ENCODE measurements at regions of chr10 and their contacts with region 1.

Region 1: GRCh38 chr10:104337974-104338735 is at the start of gene ITPRIP:
- DNase-seq: peak; percentile 54 to 87 (median 66)
- ATAC-seq: peak; percentile 71
- H3K4me3 ChIP-seq: peak within 1 kb of the TSS; percentile 92
- H3K4me3 Mint-ChIP-seq: peak within 1 kb of the TSS; percentile 96
- H3K27ac ChIP-seq: peak within 1 kb of the TSS; percentile 89 to 92
- H3K27ac Mint-ChIP-seq: peak within 1 kb of the TSS; percentile 88
- H3K4me1 ChIP-seq: peaks cover 51% of the 10 kb centered on the region
- H3K4me1 Mint-ChIP-seq: peaks cover 57% of the 10 kb centered on the region
- H3K27me3 ChIP-seq: no peaks in the 10 kb centered on the region
- H3K27me3 Mint-ChIP-seq: no peaks in the 10 kb centered on the region
- CTCF ChIP-seq: peak; percentile 24
- total RNA-seq, gene ITPRIP: 127 to 133 TPM

Region 2: DNA sequence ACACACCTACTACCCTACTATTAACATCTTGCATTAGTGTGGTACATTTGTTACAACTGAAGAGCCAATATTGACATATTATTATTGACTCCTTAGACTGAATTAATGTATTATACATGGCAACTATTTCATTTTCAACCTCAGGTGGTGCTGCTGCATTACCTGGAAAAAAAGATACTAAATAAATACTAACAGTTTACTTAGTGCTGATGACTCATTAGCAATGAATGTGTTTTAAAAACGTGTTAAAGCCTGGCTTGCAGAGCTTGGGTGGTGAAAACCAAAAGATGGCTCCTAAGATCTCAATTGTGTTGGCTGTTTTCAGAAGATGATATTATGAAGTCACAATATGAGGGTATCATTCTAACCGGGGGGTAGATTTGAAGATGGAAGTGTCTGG is 140.8 kb before region 1 on chr10:
- CTCF ChIA-PET with region 1: no interaction called
- POLR2A ChIA-PET with region 1: no interaction called
- intact Hi-C with region 1: no loop called
- DNase-seq: no peak
- ATAC-seq: no peak
- H3K4me3 ChIP-seq: no peak overlapping the region
- H3K4me3 Mint-ChIP-seq: no peak overlapping the region
- H3K27ac ChIP-seq: no peak overlapping the region
- H3K27ac Mint-ChIP-seq: no peak overlapping the region
- H3K4me1 ChIP-seq: no peaks in the 10 kb centered on the region
- H3K4me1 Mint-ChIP-seq: no peaks in the 10 kb centered on the region
- H3K27me3 ChIP-seq: peaks cover 0 to 4% of the 10 kb centered on the region in 2 experiments
- H3K27me3 Mint-ChIP-seq: peaks cover 26% of the 10 kb centered on the region
- CTCF ChIP-seq: no peak

Region 3: DNA sequence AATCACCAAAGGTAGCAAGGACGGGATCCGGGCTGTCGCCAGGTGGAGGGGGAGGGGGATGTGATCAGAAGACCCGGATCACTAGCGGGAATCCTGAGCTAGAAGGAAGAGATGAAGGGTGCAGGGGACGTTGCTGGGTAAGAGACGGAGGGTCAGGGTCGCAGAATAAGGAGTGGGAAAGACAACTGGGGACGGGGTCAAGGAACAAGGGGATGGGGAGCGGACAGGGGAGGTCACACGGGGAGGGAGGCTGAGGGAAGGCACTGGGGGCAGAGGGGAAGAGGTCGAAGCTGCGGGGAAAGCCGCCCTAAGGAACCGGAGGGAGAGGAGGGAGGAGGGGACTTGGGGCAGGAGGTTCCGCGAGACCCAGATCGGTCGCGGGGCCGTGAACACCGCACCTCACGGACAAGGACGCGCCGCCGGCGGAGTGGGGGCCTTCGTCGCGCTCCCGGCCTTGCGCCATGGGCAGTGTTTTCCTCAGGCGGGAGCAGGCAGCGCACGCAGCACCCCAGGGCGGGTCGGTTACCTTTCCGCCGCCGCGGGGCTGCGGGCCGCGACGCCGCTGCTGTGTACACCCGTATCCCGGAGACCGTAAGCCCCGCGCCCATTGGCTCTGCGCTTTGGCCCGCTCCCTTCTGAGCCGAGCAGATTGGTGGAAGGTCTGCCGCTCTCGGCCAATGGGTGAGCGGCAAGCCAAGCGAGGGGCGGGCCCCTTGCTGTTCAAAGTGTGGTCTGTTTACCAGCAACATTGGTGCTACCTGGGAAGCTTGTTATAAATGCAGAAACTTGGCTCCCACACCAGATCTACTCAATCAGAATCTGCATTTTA is 106.2 kb before region 1 on chr10 and contains the start of gene CFAP43:
- CTCF ChIA-PET with region 1: no interaction called
- POLR2A ChIA-PET with region 1: no interaction called
- intact Hi-C with region 1: loop called in 1 of 2 experiments (anchors 5 kb)
- DNase-seq: peak; percentile 99 to 100 (median 99)
- ATAC-seq: peak; percentile 99
- H3K4me3 ChIP-seq: peak within 1 kb of the TSS; percentile 74
- H3K4me3 Mint-ChIP-seq: peak within 1 kb of the TSS; percentile 96
- H3K27ac ChIP-seq: no peak within 1 kb of the TSS
- H3K27ac Mint-ChIP-seq: peak within 1 kb of the TSS; percentile 83
- H3K4me1 ChIP-seq: peaks cover 13% of the 10 kb centered on the region
- H3K4me1 Mint-ChIP-seq: peaks cover 14% of the 10 kb centered on the region
- H3K27me3 ChIP-seq: peaks cover 6 to 9% of the 10 kb centered on the region in 2 experiments
- H3K27me3 Mint-ChIP-seq: peaks cover 33% of the 10 kb centered on the region
- CTCF ChIP-seq: no peak
- total RNA-seq, gene CFAP43: not detected

Region 4: DNA sequence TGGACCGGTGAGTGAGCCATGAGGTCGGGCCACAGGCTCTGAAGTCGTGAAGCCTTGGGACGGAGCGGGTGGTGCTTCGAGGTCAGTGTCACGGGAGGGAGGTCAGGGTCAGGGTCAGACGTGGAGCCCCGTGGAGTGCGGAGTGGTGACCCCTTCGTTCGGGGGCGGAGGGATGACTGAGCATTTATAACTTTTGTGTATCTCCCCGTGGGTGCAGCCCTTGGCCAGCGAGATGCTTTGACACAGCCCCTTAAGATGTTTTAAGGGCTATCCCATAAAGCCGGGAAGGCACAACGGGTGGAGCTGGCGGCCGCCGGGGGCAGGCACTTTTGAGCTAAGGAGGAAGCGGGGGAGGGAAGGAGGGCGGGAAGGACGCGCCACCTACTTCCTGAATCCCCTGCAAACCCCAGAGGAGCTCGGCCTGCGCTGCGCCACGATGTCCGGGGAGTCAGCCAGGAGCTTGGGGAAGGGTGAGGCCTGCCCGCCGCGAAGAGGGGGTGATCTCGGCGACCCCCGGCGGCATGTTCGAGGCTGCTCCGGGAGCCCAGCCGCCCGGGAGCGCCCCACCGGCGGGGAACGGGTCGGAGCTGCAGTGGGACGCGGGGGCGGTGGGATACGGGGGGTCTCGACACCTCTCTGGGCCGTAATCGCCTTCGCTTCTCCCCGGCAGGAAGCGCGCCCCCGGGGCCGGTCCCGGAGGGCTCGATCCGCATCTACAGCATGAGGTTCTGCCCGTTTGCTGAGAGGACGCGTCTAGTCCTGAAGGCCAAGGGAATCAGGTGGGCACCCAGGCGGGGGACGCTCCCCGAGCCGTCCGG is 83.5 kb before region 1 on chr10 and contains the start of gene GSTO1:
- CTCF ChIA-PET with region 1: interaction called, 3 read pairs
- POLR2A ChIA-PET with region 1: interaction called, 21 read pairs
- intact Hi-C with region 1: no loop called
- DNase-seq: peak in 13 of 14 experiments; percentile 13 to 77 (median 46)
- ATAC-seq: peak; percentile 50
- H3K4me3 ChIP-seq: peak within 1 kb of the TSS; percentile 98
- H3K4me3 Mint-ChIP-seq: peak within 1 kb of the TSS; percentile 99
- H3K27ac ChIP-seq: peak within 1 kb of the TSS; percentile 73 to 83
- H3K27ac Mint-ChIP-seq: peak within 1 kb of the TSS; percentile 87
- H3K4me1 ChIP-seq: peaks cover 27% of the 10 kb centered on the region
- H3K4me1 Mint-ChIP-seq: peaks cover 51% of the 10 kb centered on the region
- H3K27me3 ChIP-seq: no peaks in the 10 kb centered on the region
- H3K27me3 Mint-ChIP-seq: no peaks in the 10 kb centered on the region
- CTCF ChIP-seq: no peak
- total RNA-seq, gene GSTO1: 23.9 to 26.1 TPM

Region 5: GRCh38 chr10:104268716-104269645 is 69.2 kb before region 1 on chr10 and contains the start of gene GSTO2:
- CTCF ChIA-PET with region 1: interaction called, 5 read pairs
- POLR2A ChIA-PET with region 1: interaction called, 13 read pairs
- intact Hi-C with region 1: loop called in 1 of 2 experiments (anchors 2 kb)
- DNase-seq: peak; percentile 94 to 100 (median 96)
- ATAC-seq: peak; percentile 89
- H3K4me3 ChIP-seq: peak within 1 kb of the TSS; percentile 84
- H3K4me3 Mint-ChIP-seq: peak within 1 kb of the TSS; percentile 94
- H3K27ac ChIP-seq: peak within 1 kb of the TSS; percentile 92
- H3K27ac Mint-ChIP-seq: peak within 1 kb of the TSS; percentile 93
- H3K4me1 ChIP-seq: peaks cover 24% of the 10 kb centered on the region
- H3K4me1 Mint-ChIP-seq: peaks cover 48% of the 10 kb centered on the region
- H3K27me3 ChIP-seq: no peaks in the 10 kb centered on the region
- H3K27me3 Mint-ChIP-seq: no peaks in the 10 kb centered on the region
- CTCF ChIP-seq: no peak
- total RNA-seq, gene GSTO2: 0.77 to 1.2 TPM

Region 6: GRCh38 chr10:104291439-104291951 is 46.7 kb before region 1 on chr10:
- CTCF ChIA-PET with region 1: interaction called, 5 read pairs
- POLR2A ChIA-PET with region 1: interaction called, 14 read pairs
- intact Hi-C with region 1: no loop called
- DNase-seq: peak; percentile 81 to 95 (median 86)
- ATAC-seq: peak; percentile 100
- H3K4me3 ChIP-seq: no peak overlapping the region
- H3K4me3 Mint-ChIP-seq: no peak overlapping the region
- H3K27ac ChIP-seq: no peak overlapping the region
- H3K27ac Mint-ChIP-seq: no peak overlapping the region
- H3K4me1 ChIP-seq: peaks cover 8% of the 10 kb centered on the region
- H3K4me1 Mint-ChIP-seq: peaks cover 7% of the 10 kb centered on the region
- H3K27me3 ChIP-seq: peaks cover 0 to 4% of the 10 kb centered on the region in 2 experiments
- H3K27me3 Mint-ChIP-seq: peaks cover 26% of the 10 kb centered on the region
- CTCF ChIP-seq: peak; percentile 100

Region 7: GRCh38 chr10:104322416-104322782 is 15.8 kb before region 1 on chr10:
- CTCF ChIA-PET with region 1: interaction called, 4 read pairs
- POLR2A ChIA-PET with region 1: interaction called, 64 read pairs
- intact Hi-C with region 1: loop called in 1 of 2 experiments (anchors 2 kb)
- DNase-seq: peak in 5 of 14 experiments; percentile 32 to 79 (median 47)
- ATAC-seq: peak; percentile 50
- H3K4me3 ChIP-seq: peak overlapping the region; percentile 22
- H3K4me3 Mint-ChIP-seq: peak overlapping the region; percentile 81
- H3K27ac ChIP-seq: peak overlapping the region; percentile 39 to 79
- H3K27ac Mint-ChIP-seq: peak overlapping the region; percentile 88
- H3K4me1 ChIP-seq: peaks cover 93% of the 10 kb centered on the region
- H3K4me1 Mint-ChIP-seq: peaks cover 99% of the 10 kb centered on the region
- H3K27me3 ChIP-seq: no peaks in the 10 kb centered on the region
- H3K27me3 Mint-ChIP-seq: no peaks in the 10 kb centered on the region
- CTCF ChIP-seq: no peak

Region 8: DNA sequence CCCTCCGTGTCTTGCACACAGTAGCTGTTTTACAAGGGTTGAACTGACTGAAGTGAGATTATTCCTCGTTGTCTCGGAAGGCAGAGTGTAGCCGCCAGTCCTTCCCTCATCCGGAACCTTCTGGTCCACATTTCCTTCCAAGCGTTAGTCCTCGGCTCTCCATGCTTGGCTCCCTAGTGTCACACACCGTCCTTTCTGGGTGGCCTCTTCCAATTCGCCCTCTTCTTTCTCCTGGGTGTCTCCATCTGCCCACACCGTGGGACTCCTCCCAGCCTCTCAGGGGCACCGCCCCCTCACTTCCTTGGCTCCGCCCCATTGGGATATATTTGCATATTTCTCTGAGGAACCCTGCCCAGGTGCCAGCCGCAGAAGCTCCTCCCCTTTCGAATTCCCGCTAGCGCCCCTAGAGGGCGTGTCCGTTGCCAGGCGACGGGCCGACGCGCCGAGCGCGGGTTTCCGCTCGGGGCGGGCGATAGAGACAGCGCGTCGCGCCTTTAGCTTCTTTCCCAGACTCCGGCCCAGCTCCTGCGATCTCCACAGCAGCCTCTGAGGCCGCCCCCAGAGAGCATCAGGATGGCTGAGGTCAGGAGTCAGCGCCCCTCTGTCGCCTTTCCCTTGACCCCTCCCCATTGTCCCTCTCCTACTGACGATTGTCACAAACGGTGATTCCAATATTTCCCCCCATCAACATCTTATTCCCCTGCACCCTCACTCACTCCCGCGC is 15.3 kb after region 1 on chr10 and contains the start of gene CFAP58:
- CTCF ChIA-PET with region 1: interaction called, 13 read pairs
- POLR2A ChIA-PET with region 1: interaction called, 20 read pairs
- intact Hi-C with region 1: loop called (anchors 1 to 2 kb)
- DNase-seq: peak; percentile 84 to 97 (median 88)
- ATAC-seq: peak; percentile 80
- H3K4me3 ChIP-seq: peak within 1 kb of the TSS; percentile 46
- H3K4me3 Mint-ChIP-seq: peak within 1 kb of the TSS; percentile 26
- H3K27ac ChIP-seq: no peak within 1 kb of the TSS
- H3K27ac Mint-ChIP-seq: no peak within 1 kb of the TSS
- H3K4me1 ChIP-seq: peaks cover 27% of the 10 kb centered on the region
- H3K4me1 Mint-ChIP-seq: peaks cover 12% of the 10 kb centered on the region
- H3K27me3 ChIP-seq: no peaks in the 10 kb centered on the region
- H3K27me3 Mint-ChIP-seq: no peaks in the 10 kb centered on the region
- CTCF ChIP-seq: peak; percentile 84
- total RNA-seq, gene CFAP58: not detected

Region 9: GRCh38 chr10:104424719-104425118 is 86.6 kb after region 1 on chr10:
- CTCF ChIA-PET with region 1: no interaction called
- POLR2A ChIA-PET with region 1: no interaction called
- intact Hi-C with region 1: no loop called
- DNase-seq: no peak
- ATAC-seq: no peak
- H3K4me3 ChIP-seq: no peak overlapping the region
- H3K4me3 Mint-ChIP-seq: no peak overlapping the region
- H3K27ac ChIP-seq: no peak overlapping the region
- H3K27ac Mint-ChIP-seq: no peak overlapping the region
- H3K4me1 ChIP-seq: no peaks in the 10 kb centered on the region
- H3K4me1 Mint-ChIP-seq: no peaks in the 10 kb centered on the region
- H3K27me3 ChIP-seq: peaks cover 0 to 2% of the 10 kb centered on the region in 2 experiments
- H3K27me3 Mint-ChIP-seq: no peaks in the 10 kb centered on the region
- CTCF ChIP-seq: no peak

Region 10: DNA sequence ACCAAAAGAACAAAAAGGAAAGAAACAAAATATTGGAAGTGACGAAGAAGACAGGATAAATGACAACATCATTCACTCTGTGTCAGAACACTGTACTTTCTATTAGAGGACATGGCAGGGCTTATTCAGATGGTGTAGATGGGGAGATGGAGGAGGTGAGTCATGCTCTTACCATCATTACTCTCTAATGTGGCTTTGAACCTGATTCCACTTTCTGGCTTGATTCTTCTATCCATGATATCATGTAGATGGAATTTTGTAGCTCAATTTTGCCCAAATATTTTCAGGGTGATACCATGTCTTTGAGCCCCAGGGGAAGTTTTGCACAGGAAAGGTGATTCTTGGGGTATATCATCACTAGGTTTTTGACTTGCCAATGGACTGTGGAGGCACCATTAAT is 107.2 kb after region 1 on chr10:
- CTCF ChIA-PET with region 1: no interaction called
- POLR2A ChIA-PET with region 1: no interaction called
- intact Hi-C with region 1: no loop called
- DNase-seq: no peak
- ATAC-seq: no peak
- H3K4me3 ChIP-seq: no peak overlapping the region
- H3K4me3 Mint-ChIP-seq: no peak overlapping the region
- H3K27ac ChIP-seq: no peak overlapping the region
- H3K27ac Mint-ChIP-seq: no peak overlapping the region
- H3K4me1 ChIP-seq: no peaks in the 10 kb centered on the region
- H3K4me1 Mint-ChIP-seq: no peaks in the 10 kb centered on the region
- H3K27me3 ChIP-seq: peaks cover 3 to 7% of the 10 kb centered on the region in 2 experiments
- H3K27me3 Mint-ChIP-seq: peaks cover 47% of the 10 kb centered on the region
- CTCF ChIP-seq: no peak

Measured in CD4-positive, alpha-beta T cell (primary cell).